Naive thymus-derived CD4-positive, alpha-beta T cell (primary cell): ENCODE measurements at regions of chr3 and their contacts with region 1.

Region 1: DNA sequence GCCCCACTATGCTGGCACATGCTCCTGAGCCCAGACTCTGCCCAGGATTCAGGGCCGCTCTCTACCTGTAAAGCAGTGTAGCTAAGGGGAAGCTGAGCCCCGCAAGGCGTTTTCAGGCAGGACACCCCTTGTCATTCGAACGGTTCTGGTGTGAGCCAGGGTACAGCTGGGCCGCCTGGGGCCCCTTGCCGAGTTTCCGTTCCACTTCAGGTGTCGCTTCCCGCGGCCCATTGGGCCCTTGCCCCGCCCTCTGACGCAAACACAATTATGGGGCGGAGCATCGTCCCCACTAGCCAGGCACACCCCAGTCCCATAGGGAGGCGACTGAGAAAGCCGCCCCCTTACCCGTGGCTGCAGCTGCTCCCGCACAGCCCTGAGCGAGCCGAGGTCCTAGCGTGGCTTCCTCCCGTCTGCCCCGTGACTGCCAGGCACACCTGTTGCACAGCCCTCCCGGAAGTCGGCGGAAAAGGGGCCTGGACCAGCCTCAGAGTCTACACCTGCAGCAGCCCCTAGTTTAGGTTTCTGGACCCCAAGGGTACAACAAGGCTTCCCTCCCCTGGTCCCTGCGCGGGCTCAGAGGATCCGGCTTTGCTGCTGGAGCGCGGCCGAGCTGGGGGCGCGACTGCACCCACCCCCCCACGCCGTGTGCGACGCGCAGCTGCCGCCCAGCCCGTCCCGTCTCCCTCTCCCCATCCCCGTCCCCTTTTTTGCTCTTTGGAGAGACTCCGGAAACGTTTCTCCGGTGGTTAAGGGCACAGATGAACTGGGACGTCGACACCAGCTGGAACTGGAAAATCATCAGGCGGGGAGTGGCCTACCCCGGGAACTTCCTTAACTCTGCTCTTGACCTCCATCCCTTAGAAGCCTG is at the start of gene PLSCR2:
- DNase-seq: peak; percentile 56 to 79 (median 74)
- ATAC-seq: peak; percentile 97
- H3K4me3 ChIP-seq: peak within 1 kb of the TSS; percentile 73
- H3K4me3 Mint-ChIP-seq: peak within 1 kb of the TSS; percentile 75 to 88 (median 82)
- H3K27ac ChIP-seq: peak within 1 kb of the TSS; percentile 69
- H3K27ac Mint-ChIP-seq: peak within 1 kb of the TSS; percentile 60 to 88 (median 81)
- H3K4me1 ChIP-seq: no peaks in the 10 kb centered on the region
- H3K4me1 Mint-ChIP-seq: peaks cover 0 to 18% (median 4%) of the 10 kb centered on the region in 7 donors
- H3K27me3 ChIP-seq: no peaks in the 10 kb centered on the region
- H3K27me3 Mint-ChIP-seq: peaks cover 0 to 9% (median 5%) of the 10 kb centered on the region in 5 donors
- total RNA-seq, gene PLSCR2: 0.44 to 0.89 (median 0.72) TPM in 4 of 5 experiments, not detected in the other

Region 2: DNA sequence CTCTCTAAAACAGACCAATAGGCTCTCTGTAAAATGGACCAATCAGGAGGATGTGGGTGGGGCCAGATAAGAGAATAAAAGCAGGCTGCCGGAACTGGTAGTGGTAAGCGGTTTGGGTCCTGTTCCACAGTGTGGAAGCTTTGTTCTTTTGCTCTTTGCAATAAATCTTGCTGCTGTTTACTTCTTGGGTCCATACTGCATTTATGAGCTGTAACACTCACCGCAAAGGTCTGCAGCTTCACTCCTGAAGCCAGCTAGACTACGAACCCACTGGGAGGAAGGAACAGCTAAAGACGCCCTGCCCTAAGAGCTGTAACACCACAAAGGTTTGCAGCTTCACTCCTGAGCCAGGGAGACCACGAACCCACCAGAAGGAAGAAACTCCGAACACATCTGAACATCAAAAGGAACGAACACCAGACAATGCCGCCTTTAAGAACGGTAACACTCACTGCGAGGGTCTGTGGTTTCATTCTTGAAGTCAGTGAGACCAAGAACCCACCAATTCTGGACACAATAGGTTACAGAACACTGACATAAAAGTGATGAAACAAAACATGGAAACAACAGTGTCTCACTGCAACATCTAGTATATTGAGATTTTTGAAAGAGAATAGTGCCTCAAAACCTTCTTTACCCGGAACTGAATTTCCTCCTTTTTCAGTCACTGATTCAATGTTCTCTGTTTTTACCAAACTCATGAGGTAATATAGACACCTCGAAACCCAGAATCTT is 28.8 kb after region 1 on chr3:
- CTCF ChIA-PET with region 1: no interaction called
- POLR2A ChIA-PET with region 1: interaction called, 5 read pairs
- intact Hi-C with region 1: loop called (anchors 1 kb)
- DNase-seq: peak in 7 of 9 donors; percentile 48 to 74 (median 60)
- ATAC-seq: peak; percentile 67
- H3K4me3 ChIP-seq: peak overlapping the region; percentile 43
- H3K4me3 Mint-ChIP-seq: peak overlapping the region; percentile 77 to 95 (median 85)
- H3K27ac ChIP-seq: peak overlapping the region; percentile 39
- H3K27ac Mint-ChIP-seq: peak overlapping the region; percentile 79 to 95 (median 82)
- H3K4me1 ChIP-seq: no peaks in the 10 kb centered on the region
- H3K4me1 Mint-ChIP-seq: peaks cover 0 to 22% (median 18%) of the 10 kb centered on the region in 7 donors
- H3K27me3 ChIP-seq: no peaks in the 10 kb centered on the region
- H3K27me3 Mint-ChIP-seq: peaks cover 0 to 5% (median under 1%) of the 10 kb centered on the region in 5 donors

Region 3: DNA sequence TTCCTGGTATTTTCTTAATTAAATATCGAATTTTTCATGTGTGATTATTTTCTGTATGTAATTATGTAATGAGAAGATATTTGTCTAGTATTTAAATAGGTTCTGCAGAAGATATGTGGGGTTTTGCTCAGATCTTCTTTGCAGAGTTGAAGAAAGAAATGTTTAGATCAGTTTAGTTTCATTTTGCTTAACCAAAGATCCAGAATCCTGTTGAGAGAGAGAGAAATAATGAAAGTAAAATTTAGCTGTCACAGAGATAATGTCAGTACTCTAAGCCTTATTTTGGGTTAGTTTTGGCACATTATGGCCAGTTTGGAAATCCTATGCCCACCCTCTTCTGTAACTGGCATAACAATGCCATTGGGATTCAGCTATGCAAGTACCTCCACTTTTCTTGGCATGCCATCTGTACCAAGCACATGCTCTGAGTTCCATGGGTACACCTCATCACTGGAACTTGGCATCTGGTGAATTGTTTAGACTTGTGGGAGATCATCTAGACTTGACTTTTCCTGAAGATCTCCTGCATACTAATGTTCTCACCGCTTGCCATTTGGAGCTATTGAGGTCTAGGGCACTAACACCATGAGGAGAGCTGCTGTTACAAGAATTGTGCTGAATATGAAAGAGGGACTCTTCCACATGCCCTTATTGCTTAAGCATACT is 44.1 kb after region 1 on chr3:
- CTCF ChIA-PET with region 1: no interaction called
- POLR2A ChIA-PET with region 1: no interaction called
- intact Hi-C with region 1: loop called in 1 of 2 experiments (anchors 5 kb)
- DNase-seq: peak in 1 of 9 donors; percentile 10
- ATAC-seq: no peak
- H3K4me3 ChIP-seq: no peak overlapping the region
- H3K4me3 Mint-ChIP-seq: peak overlapping the region in 8 of 10 donors; percentile 3 to 72 (median 32)
- H3K27ac ChIP-seq: peak overlapping the region; percentile 28
- H3K27ac Mint-ChIP-seq: peak overlapping the region; percentile 3 to 94 (median 70)
- H3K4me1 ChIP-seq: no peaks in the 10 kb centered on the region
- H3K4me1 Mint-ChIP-seq: peaks cover 8 to 38% (median 24%) of the 10 kb centered on the region in 7 donors
- H3K27me3 ChIP-seq: no peaks in the 10 kb centered on the region
- H3K27me3 Mint-ChIP-seq: no peaks in the 10 kb centered on the region